Activated T-helper 1 cell treated with anti-CD3 and anti-CD28 coated beads, Interleukin-12 subunit alpha, Interleukin-12 subunit beta, Interleukin-2, Interleukin-4 antibody, amounts not matched to agents 30 ng/mL and 10 ng/mL and 1 ng/mL, durations not matched to agents 14 hours and 24 hours and 36 hours (primary cell): ENCODE measurements at regions of chr1 and their contacts with region 1.

Region 1: GRCh38 chr1:24536391-24536840 is 19.5 kb upstream of the NCMAP start:
- DNase-seq: peak; percentile 38
- H3K4me3 Mint-ChIP-seq: peak overlapping the region; percentile 75
- H3K27ac Mint-ChIP-seq: peak overlapping the region; percentile 95
- H3K4me1 Mint-ChIP-seq: peaks cover 67% of the 10 kb centered on the region
- H3K27me3 Mint-ChIP-seq: no peaks in the 10 kb centered on the region

Region 2: DNA sequence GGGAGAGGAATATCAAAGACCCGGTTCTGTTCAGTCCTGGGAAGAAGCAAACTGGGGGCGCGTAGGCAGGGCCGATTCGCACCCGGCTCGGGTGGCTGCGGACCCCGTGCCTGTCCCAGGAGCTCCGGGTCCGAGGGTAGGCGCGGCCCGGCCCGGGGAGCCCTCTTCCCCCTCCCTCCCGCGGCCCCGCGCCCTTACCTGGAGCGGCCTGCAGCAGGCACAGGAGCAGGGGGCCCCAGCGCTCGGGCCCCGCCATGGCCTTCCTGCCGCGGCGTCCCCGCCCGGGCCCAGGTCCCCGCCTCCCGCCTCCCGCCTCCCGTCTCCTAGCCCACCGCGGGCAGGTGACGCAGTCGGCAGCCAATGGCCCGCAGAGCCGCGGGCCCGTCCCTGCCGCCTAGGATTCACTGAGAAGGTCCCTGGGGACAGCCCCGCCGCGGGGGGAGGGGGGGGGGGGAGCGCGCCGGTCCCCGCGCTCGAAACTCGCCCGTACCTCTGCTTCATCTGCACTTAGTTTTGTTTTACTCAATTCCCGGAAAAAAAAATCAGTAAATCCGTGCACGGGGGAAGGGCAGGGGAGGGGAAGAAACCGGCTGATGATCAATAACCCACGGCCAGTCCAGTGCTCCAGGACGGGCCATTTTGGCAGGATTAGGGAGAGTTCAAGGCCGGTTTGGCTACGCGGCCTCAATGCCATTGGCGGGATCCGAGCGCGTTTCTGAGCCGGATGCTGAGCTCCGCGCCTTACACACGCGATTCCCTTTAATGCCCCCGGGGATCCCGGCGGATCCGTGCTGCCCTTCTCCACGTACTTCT is 349.2 kb before region 1 on chr1 and contains the start of gene IFNLR1:
- intact Hi-C with region 1: loop called (anchors 2 kb)
- DNase-seq: peak; percentile 61
- H3K4me3 Mint-ChIP-seq: peak within 1 kb of the TSS; percentile 76
- H3K27ac Mint-ChIP-seq: peak within 1 kb of the TSS; percentile 23
- H3K4me1 Mint-ChIP-seq: peaks cover 40% of the 10 kb centered on the region
- H3K27me3 Mint-ChIP-seq: peaks cover 7% of the 10 kb centered on the region
- total RNA-seq, gene IFNLR1: 2.2 and 3.1 TPM in 2 replicates

Region 3: GRCh38 chr1:24481101-24481500 is 55.3 kb before region 1 on chr1:
- intact Hi-C with region 1: loop called (anchors 1 kb)
- DNase-seq: peak; percentile 44
- H3K4me3 Mint-ChIP-seq: peak overlapping the region; percentile 60
- H3K27ac Mint-ChIP-seq: peak overlapping the region; percentile 96
- H3K4me1 Mint-ChIP-seq: peaks cover 45% of the 10 kb centered on the region
- H3K27me3 Mint-ChIP-seq: no peaks in the 10 kb centered on the region

Region 4: DNA sequence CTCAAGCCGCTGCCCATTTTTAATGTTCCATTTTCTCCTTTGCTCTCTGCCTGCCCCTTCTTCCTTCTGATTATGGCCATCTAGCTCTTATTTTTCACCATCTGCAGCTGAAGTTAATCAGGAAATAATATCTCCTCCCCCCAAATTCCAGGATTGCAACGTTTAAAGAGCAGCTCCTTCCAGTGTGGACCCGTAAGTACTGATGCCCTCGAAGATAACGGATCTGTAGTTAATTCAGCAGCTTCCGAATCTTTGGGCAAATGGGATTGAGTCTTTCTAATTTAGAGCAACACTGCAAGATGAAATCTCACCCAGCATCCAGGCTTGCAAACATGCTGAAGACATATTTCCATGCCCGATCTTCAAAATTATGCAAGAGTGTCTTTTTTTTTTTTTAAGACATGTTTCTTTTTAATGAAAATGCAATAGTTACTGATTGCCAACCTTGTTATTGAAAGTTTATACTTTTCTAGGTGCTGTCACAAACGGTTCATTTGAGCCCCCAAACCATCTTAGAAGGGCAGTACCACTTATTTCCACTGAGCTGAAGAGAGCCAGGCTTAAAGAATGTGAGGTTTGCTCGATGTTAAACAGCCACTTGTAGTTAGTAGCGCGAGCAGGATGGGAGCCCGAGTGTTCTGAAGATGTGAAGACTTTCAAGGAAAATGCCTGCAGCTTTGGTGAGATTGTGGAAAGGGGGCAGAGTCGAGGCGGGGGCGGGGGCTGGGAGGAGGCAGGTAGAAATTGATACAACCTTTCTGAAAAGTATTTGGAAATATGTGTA is 44.6 kb before region 1 on chr1:
- intact Hi-C with region 1: loop called (anchors 1 kb)
- DNase-seq: no peak
- H3K4me3 Mint-ChIP-seq: no peak overlapping the region
- H3K27ac Mint-ChIP-seq: no peak overlapping the region
- H3K4me1 Mint-ChIP-seq: peaks cover 21% of the 10 kb centered on the region
- H3K27me3 Mint-ChIP-seq: peaks cover 1% of the 10 kb centered on the region